CD8-positive, alpha-beta T cell (primary cell): ENCODE measurements at regions of chr5 and their contacts with region 1.

Region 1: DNA sequence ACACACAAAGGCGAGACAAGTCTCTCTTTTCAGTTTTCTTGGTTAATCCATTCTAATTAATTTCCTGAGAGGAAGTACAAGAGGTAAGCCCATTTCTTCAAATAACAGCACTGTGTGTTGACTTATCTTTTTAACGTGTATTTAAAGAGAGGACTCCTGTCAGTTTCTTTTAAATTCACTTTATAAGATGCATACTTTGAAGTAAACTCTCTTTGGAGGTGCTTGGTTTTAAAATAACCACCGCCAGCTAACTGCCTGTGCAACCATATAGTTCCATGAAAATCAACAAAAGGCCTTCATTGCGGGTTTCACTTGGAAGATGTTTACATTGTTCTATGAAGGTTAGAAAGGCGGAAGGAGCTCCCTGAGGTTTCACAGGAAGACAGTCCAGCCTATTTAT is 13.1 kb upstream of the SERINC5 start:
- DNase-seq: peak in 1 of 9 experiments; percentile 33
- ATAC-seq: peak; percentile 16
- H3K4me3 ChIP-seq: no peak overlapping the region
- H3K4me3 Mint-ChIP-seq: peak overlapping the region; percentile 69
- H3K27ac ChIP-seq: no peak overlapping the region
- H3K27ac Mint-ChIP-seq: peak overlapping the region; percentile 95
- H3K4me1 ChIP-seq: peaks cover 41% of the 10 kb centered on the region
- H3K4me1 Mint-ChIP-seq: peaks cover 50% of the 10 kb centered on the region
- H3K27me3 ChIP-seq: no peaks in the 10 kb centered on the region
- H3K27me3 Mint-ChIP-seq: no peaks in the 10 kb centered on the region
- CTCF ChIP-seq: no peak

Region 2: GRCh38 chr5:80181618-80182211 is 87.2 kb before region 1 on chr5:
- CTCF ChIA-PET with region 1: interaction called, 7 read pairs
- POLR2A ChIA-PET with region 1: interaction called, 4 read pairs
- intact Hi-C with region 1: loop called in 1 of 2 experiments (anchors 5 kb)
- DNase-seq: peak in 7 of 9 experiments; percentile 42 to 85 (median 67)
- ATAC-seq: peak; percentile 32
- H3K4me3 ChIP-seq: peak overlapping the region in 1 of 2 experiments; percentile 3
- H3K4me3 Mint-ChIP-seq: peak overlapping the region; percentile 64
- H3K27ac ChIP-seq: peak overlapping the region; percentile 20 to 23
- H3K27ac Mint-ChIP-seq: peak overlapping the region; percentile 96
- H3K4me1 ChIP-seq: peaks cover 89% of the 10 kb centered on the region
- H3K4me1 Mint-ChIP-seq: peaks cover 87% of the 10 kb centered on the region
- H3K27me3 ChIP-seq: no peaks in the 10 kb centered on the region
- H3K27me3 Mint-ChIP-seq: no peaks in the 10 kb centered on the region
- CTCF ChIP-seq: no peak